ENCODE measurements at regions of chr1 and their contacts with region 1.

Region 1: GRCh38 chr1:9494929-9495758 is 44.1 kb upstream of the SLC25A33 start:
- DNase-seq: peak; percentile 30 to 80 (median 69)
- ATAC-seq: peak; percentile 86
- H3K4me3 ChIP-seq: peak overlapping the region; percentile 40
- H3K4me3 Mint-ChIP-seq: peak overlapping the region; percentile 33 to 78 (median 72)
- H3K27ac ChIP-seq: no peak overlapping the region
- H3K27ac Mint-ChIP-seq: peak overlapping the region in 1 of 9 donors; percentile 65
- H3K4me1 ChIP-seq: peaks cover 0 to 4% of the 10 kb centered on the region in 2 donors
- H3K4me1 Mint-ChIP-seq: peaks cover 0 to 11% (median 4%) of the 10 kb centered on the region in 7 donors
- H3K27me3 ChIP-seq: no peaks in the 10 kb centered on the region
- H3K27me3 Mint-ChIP-seq: peaks cover 0 to 35% (median 0%) of the 10 kb centered on the region in 5 donors

Region 2: GRCh38 chr1:9110669-9111356 is 384.3 kb before region 1 on chr1:
- CTCF ChIA-PET with region 1: no interaction called
- POLR2A ChIA-PET with region 1: no interaction called
- intact Hi-C with region 1: loop called (anchors 1 to 2 kb)
- DNase-seq: peak; percentile 63 to 88 (median 79)
- ATAC-seq: peak; percentile 94
- H3K4me3 ChIP-seq: no peak overlapping the region
- H3K4me3 Mint-ChIP-seq: no peak overlapping the region
- H3K27ac ChIP-seq: no peak overlapping the region
- H3K27ac Mint-ChIP-seq: no peak overlapping the region
- H3K4me1 ChIP-seq: no peaks in the 10 kb centered on the region
- H3K4me1 Mint-ChIP-seq: peaks cover 0 to 27% (median 6%) of the 10 kb centered on the region in 7 donors
- H3K27me3 ChIP-seq: no peaks in the 10 kb centered on the region
- H3K27me3 Mint-ChIP-seq: no peaks in the 10 kb centered on the region

Region 3: GRCh38 chr1:9267352-9267686 is 227.8 kb before region 1 on chr1:
- CTCF ChIA-PET with region 1: interaction called, 5 read pairs
- POLR2A ChIA-PET with region 1: no interaction called
- intact Hi-C with region 1: loop called (anchors 1 kb)
- DNase-seq: no peak
- ATAC-seq: no peak
- H3K4me3 ChIP-seq: no peak overlapping the region
- H3K4me3 Mint-ChIP-seq: no peak overlapping the region
- H3K27ac ChIP-seq: no peak overlapping the region
- H3K27ac Mint-ChIP-seq: peak overlapping the region in 2 of 9 donors; percentile 69 to 89
- H3K4me1 ChIP-seq: no peaks in the 10 kb centered on the region
- H3K4me1 Mint-ChIP-seq: peaks cover 3 to 12% (median 5%) of the 10 kb centered on the region in 7 donors
- H3K27me3 ChIP-seq: no peaks in the 10 kb centered on the region
- H3K27me3 Mint-ChIP-seq: no peaks in the 10 kb centered on the region

Region 4: GRCh38 chr1:9292361-9293240 is 202.5 kb before region 1 on chr1 and contains the start of gene SPSB1:
- CTCF ChIA-PET with region 1: interaction called, 45 read pairs
- POLR2A ChIA-PET with region 1: interaction called, 4 read pairs
- intact Hi-C with region 1: loop called (anchors 1 kb)
- DNase-seq: peak; percentile 30 to 66 (median 56)
- ATAC-seq: peak; percentile 81
- H3K4me3 ChIP-seq: peak within 1 kb of the TSS; percentile 55
- H3K4me3 Mint-ChIP-seq: peak within 1 kb of the TSS; percentile 34 to 86 (median 66)
- H3K27ac ChIP-seq: peak within 1 kb of the TSS; percentile 27
- H3K27ac Mint-ChIP-seq: peak within 1 kb of the TSS in 8 of 9 donors; percentile 21 to 81 (median 52)
- H3K4me1 ChIP-seq: peaks cover 6 to 19% of the 10 kb centered on the region in 2 donors
- H3K4me1 Mint-ChIP-seq: peaks cover 6 to 40% (median 32%) of the 10 kb centered on the region in 7 donors
- H3K27me3 ChIP-seq: no peaks in the 10 kb centered on the region
- H3K27me3 Mint-ChIP-seq: no peaks in the 10 kb centered on the region
- total RNA-seq, gene SPSB1: 1.8 to 10.3 (median 1.9) TPM

Region 5: GRCh38 chr1:9558271-9558945 is 63.3 kb after region 1 on chr1:
- CTCF ChIA-PET with region 1: interaction called, 4 read pairs
- POLR2A ChIA-PET with region 1: no interaction called
- intact Hi-C with region 1: loop called in 1 of 2 experiments (anchors 1 kb)
- DNase-seq: no peak
- ATAC-seq: peak; percentile 32
- H3K4me3 ChIP-seq: no peak overlapping the region
- H3K4me3 Mint-ChIP-seq: peak overlapping the region in 9 of 10 donors; percentile 42 to 81 (median 70)
- H3K27ac ChIP-seq: peak overlapping the region; percentile 28
- H3K27ac Mint-ChIP-seq: peak overlapping the region; percentile 0 to 96 (median 81)
- H3K4me1 ChIP-seq: peaks cover 14 to 27% of the 10 kb centered on the region in 2 donors
- H3K4me1 Mint-ChIP-seq: peaks cover 22 to 46% (median 33%) of the 10 kb centered on the region in 7 donors
- H3K27me3 ChIP-seq: no peaks in the 10 kb centered on the region
- H3K27me3 Mint-ChIP-seq: no peaks in the 10 kb centered on the region

Region 6: DNA sequence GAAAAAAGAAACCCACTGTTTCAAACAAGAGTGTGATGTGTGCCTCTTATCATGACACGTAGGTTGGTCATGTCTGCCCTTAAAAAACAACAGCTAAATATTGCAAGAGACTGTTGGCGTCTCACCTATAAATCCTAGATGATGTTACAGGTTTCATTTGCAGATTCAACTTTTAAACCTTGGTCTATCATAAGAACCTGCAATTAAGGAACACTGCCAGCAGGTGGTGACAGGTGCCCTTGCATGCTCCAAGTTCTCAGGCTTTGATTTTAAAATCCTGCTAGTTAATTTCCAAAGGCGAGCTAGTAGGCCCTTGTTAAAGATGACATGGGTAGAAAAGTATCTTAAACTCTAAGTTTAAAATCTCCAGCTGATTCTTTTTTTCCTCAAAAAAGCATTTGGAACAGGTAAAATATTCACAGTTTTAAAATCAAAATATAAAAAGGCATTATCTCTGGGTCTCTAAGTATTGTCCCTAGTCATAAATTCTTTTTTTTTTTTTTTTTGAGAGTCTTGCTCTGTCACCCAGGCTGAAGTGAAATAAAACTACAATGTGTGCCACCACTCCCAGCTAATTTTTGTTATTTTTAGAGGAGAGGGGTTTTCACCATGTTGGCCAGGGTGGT is 289.5 kb after region 1 on chr1:
- CTCF ChIA-PET with region 1: no interaction called
- POLR2A ChIA-PET with region 1: no interaction called
- intact Hi-C with region 1: loop called in 1 of 2 experiments (anchors 1 kb)
- DNase-seq: peak; percentile 29 to 78 (median 71)
- ATAC-seq: peak; percentile 65
- H3K4me3 ChIP-seq: no peak overlapping the region
- H3K4me3 Mint-ChIP-seq: peak overlapping the region in 2 of 10 donors; percentile 28 to 38
- H3K27ac ChIP-seq: no peak overlapping the region
- H3K27ac Mint-ChIP-seq: peak overlapping the region in 5 of 9 donors; percentile 23 to 76 (median 49)
- H3K4me1 ChIP-seq: peaks cover 11 to 17% of the 10 kb centered on the region in 2 donors
- H3K4me1 Mint-ChIP-seq: peaks cover 11 to 41% (median 32%) of the 10 kb centered on the region in 7 donors
- H3K27me3 ChIP-seq: no peaks in the 10 kb centered on the region
- H3K27me3 Mint-ChIP-seq: no peaks in the 10 kb centered on the region

Measured in naive thymus-derived CD4-positive, alpha-beta T cell (primary cell).